Activated naive CD4-positive, alpha-beta T cell treated with anti-CD3 and anti-CD28 coated beads, Interleukin-2, amount 10 ng/mL, durations not matched to agents 7 days and 5 days (primary cell): ENCODE measurements at regions of chr3 and their contacts with region 1.

Region 1: DNA sequence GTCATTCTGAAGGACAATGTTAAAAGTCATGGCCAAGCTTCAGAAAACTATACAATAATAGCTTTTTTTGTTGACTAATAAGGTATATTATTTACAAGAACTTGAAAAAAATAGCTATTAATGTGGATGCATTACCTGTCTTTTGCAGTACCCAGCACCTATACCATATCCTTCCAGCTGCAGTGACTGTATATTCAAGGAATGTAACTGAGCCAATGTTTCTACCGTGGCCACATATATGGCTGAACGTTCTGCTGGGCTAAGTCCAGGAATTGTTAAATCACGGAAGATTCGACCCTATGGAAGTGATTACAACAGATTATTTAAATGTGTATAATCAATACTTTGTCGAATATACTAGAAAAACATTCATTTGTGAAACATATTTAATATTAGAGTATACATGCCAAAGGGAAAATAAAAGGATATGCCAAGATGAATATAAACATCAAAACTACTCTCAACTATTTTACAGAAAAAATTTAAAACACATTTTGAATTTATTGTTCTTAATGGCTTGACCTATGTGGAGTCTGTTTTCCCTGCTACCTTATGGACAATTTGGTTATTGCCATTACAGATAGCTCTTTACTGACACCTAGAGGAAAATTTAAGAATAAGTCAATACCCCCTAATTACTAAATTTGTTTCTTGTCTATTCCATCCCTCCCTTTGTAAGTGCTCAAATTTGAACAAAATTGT is 17.6 kb downstream of the ACAD11 start:
- DNase-seq: no peak
- H3K4me3 Mint-ChIP-seq: no peak overlapping the region
- H3K27ac Mint-ChIP-seq: no peak overlapping the region
- H3K4me1 Mint-ChIP-seq: no peaks in the 10 kb centered on the region
- H3K27me3 Mint-ChIP-seq: no peaks in the 10 kb centered on the region

Region 2: GRCh38 chr3:132535575-132536441 is 106.2 kb before region 1 on chr3:
- CTCF ChIA-PET with region 1: interaction called, 103 read pairs
- DNase-seq: peak; percentile 68
- H3K4me3 Mint-ChIP-seq: no peak overlapping the region
- H3K27ac Mint-ChIP-seq: no peak overlapping the region
- H3K4me1 Mint-ChIP-seq: no peaks in the 10 kb centered on the region
- H3K27me3 Mint-ChIP-seq: no peaks in the 10 kb centered on the region

Region 3: DNA sequence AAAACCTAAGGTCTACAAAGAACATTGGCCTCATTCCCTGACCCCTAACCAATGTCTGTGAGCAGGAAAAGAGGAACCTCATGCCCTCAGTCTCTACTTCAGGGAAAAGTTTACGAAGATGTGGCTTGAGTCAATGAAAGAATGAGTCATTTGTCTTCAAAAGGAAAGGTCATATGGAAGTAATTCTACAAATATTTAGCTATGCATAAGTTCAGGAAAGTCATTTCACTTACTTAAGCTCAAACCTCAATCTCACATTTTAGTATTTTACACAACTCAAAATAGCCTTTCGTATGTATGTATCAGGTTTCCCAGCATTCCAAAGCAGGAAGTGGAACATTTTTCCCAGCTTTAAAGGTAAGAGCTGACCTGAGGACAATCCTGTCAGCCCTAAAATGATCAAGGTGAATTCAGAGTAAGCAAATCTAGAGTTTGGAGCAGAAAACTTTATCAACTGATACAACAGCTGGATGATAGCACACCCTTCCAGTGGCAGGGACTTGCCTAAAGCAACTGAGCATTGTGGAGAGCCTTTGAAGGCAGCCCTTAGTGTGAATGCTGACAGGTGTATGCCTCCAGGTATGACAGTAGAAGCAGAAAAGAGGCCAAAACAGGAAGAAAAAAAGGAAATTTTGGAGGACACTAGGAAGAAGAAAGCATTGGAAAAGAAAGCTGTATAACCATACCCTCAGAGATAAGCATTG is 98.8 kb before region 1 on chr3:
- CTCF ChIA-PET with region 1: interaction called, 103 read pairs
- DNase-seq: no peak
- H3K4me3 Mint-ChIP-seq: no peak overlapping the region
- H3K27ac Mint-ChIP-seq: no peak overlapping the region
- H3K4me1 Mint-ChIP-seq: peaks cover 12% of the 10 kb centered on the region
- H3K27me3 Mint-ChIP-seq: no peaks in the 10 kb centered on the region

Region 4: DNA sequence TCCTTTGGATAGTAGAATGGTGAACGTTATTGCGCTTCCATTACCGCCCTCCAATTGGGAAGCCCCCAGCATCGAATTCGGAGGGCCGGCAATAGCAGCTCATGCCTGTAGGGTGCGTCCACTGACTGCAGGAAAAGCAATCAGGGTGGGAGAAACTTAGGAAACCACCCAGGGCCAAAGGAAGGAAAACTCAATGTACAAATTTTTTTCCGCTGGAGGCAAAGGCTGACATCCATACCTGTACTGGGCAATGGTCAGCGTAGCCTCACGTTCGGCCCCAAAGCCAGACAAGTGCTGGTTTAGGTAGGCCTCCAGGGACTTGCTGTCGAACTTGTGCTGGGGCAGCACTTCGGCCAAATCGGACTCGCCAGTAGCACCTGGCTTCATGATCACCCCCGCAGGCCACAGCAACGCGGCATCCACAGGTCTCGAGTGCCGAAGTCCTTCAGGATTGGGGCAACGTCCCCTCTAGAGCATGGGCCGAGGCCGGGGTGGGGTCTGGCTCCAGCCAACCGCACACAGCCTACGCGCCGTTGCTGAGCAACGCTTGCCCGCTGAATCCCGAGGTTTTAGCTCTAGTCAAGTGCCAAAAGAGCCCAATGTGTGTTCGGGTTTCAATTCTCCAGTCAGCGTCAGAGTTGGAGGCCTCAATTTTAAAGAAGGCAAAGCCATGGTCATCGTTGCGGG is 17.5 kb after region 1 on chr3 and contains the start of gene ACAD11:
- CTCF ChIA-PET with region 1: interaction called, 11 read pairs
- DNase-seq: peak; percentile 53
- H3K4me3 Mint-ChIP-seq: peak within 1 kb of the TSS; percentile 95
- H3K27ac Mint-ChIP-seq: peak within 1 kb of the TSS; percentile 95
- H3K4me1 Mint-ChIP-seq: peaks cover 37% of the 10 kb centered on the region
- H3K27me3 Mint-ChIP-seq: no peaks in the 10 kb centered on the region

Region 5: DNA sequence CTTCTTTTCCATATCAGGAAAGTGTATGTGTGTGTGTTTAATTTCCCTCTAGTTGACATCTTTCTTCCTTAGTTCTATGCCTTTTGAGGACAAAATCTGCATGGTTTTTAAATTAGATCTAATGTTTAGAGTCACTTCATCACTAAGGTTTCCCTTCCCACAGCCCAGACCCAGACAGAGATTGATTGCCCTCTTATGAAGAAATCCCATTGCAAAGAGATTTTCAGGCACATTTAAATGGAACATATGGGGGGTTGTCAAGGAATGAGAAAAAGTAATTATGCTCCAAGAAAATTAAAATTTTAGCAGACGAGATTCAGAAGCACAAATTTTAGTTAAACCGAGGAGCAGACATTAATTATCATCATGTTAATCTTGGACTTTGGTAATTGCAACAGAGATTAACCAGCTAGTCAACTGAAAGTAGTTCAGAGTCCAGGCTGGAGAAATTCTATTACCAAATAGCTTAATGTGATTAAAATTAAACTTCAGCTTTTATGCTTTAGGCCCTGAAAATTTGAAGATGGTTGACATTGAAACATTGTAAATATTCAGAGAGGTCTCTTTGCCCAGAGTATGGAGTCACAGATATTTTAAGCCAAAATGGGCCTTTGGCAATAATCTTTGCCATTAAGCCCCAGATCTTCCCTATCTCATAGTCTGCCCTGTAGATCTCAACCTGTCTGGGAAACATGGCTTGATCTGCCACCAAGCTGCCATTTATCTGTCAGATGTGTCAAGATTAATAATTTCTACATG is 539.6 kb after region 1 on chr3:
- CTCF ChIA-PET with region 1: no interaction called
- DNase-seq: no peak
- H3K4me3 Mint-ChIP-seq: no peak overlapping the region
- H3K27ac Mint-ChIP-seq: no peak overlapping the region
- H3K4me1 Mint-ChIP-seq: no peaks in the 10 kb centered on the region
- H3K27me3 Mint-ChIP-seq: peaks cover 8% of the 10 kb centered on the region